ENCODE measurements at regions of chr12 and their contacts with region 1.

Region 1: DNA sequence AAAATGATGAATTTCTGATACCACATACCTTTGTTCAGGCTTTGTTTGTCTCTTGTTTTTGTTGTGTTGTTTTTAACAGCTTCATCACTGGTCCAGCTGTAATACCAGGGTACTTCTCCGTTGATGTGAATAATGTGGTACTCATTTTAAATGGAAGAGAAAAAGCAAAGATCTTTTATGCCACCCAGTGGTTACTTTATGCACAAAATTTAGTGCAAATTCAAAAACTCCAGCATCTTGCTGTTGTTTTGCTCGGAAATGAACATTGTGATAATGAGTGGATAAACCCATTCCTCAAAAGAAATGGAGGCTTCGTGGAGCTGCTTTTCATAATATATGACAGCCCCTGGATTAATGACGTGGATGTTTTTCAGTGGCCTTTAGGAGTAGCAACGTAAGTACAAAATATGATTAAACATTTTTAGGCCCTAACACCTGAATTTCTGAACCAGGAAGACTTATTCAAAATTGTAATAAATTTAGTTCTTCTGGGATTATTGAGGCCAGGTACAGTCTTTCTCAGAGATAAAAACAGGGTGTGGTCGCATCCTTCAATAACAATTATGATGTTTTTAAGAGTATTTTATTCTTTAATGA is 22.4 kb downstream of the RXYLT1 start:
- DNase-seq: peak; percentile 25
- ATAC-seq: peak; percentile 48
- H3K4me3 ChIP-seq: no peak overlapping the region
- H3K27ac ChIP-seq: no peak overlapping the region
- H3K4me1 ChIP-seq: no peaks in the 10 kb centered on the region; the same call in 1 of the 2 replicates
- H3K27me3 ChIP-seq: no peaks in the 10 kb centered on the region
- CTCF ChIP-seq: peak; percentile 63
- POLR2A ChIP-seq: no peak
- RAD21 ChIP-seq: peak; percentile 63

Region 2: GRCh38 chr12:63103494-63104131 is 698.5 kb before region 1 on chr12:
- CTCF ChIA-PET with region 1: no interaction called
- POLR2A ChIA-PET with region 1: no interaction called
- dilution Hi-C with region 1: no loop called
- in situ Hi-C with region 1: no loop called
- intact Hi-C with region 1: loop called (anchors 1 kb)
- DNase-seq: peak; percentile 23
- ATAC-seq: no peak; the same call in 1 of the 2 replicates
- H3K4me3 ChIP-seq: no peak overlapping the region
- H3K27ac ChIP-seq: no peak overlapping the region
- H3K4me1 ChIP-seq: no peaks in the 10 kb centered on the region
- H3K27me3 ChIP-seq: no peaks in the 10 kb centered on the region
- CTCF ChIP-seq: peak; percentile 61
- POLR2A ChIP-seq: no peak
- RAD21 ChIP-seq: peak; percentile 61

Region 3: GRCh38 chr12:63668028-63668799 is 133.9 kb before region 1 on chr12 and contains the start of gene DPY19L2:
- CTCF ChIA-PET with region 1: interaction called, 3 read pairs
- POLR2A ChIA-PET with region 1: no interaction called
- dilution Hi-C with region 1: no loop called
- in situ Hi-C with region 1: no loop called
- intact Hi-C with region 1: loop called (anchors 2 kb)
- DNase-seq: peak; percentile 52
- ATAC-seq: peak; percentile 90
- H3K4me3 ChIP-seq: peak within 1 kb of the TSS; percentile 97
- H3K27ac ChIP-seq: peak within 1 kb of the TSS; percentile 43
- H3K4me1 ChIP-seq: no peaks in the 10 kb centered on the region
- H3K27me3 ChIP-seq: no peaks in the 10 kb centered on the region
- CTCF ChIP-seq: no peak
- POLR2A ChIP-seq: no peak
- RAD21 ChIP-seq: no peak
- total RNA-seq, gene DPY19L2: 0.90 and 1.4 TPM in 2 replicates

Region 4: GRCh38 chr12:63753744-63754143 is 48.4 kb before region 1 on chr12:
- CTCF ChIA-PET with region 1: no interaction called
- POLR2A ChIA-PET with region 1: no interaction called
- dilution Hi-C with region 1: no loop called
- in situ Hi-C with region 1: no loop called
- intact Hi-C with region 1: no loop called
- DNase-seq: no peak
- ATAC-seq: no peak
- H3K4me3 ChIP-seq: no peak overlapping the region
- H3K27ac ChIP-seq: no peak overlapping the region
- H3K4me1 ChIP-seq: no peaks in the 10 kb centered on the region
- H3K27me3 ChIP-seq: peaks cover 6% of the 10 kb centered on the region
- CTCF ChIP-seq: no peak
- POLR2A ChIP-seq: no peak
- RAD21 ChIP-seq: no peak

Region 5: GRCh38 chr12:63779498-63780481 is 22.3 kb before region 1 on chr12 and contains the start of gene RXYLT1:
- CTCF ChIA-PET with region 1: interaction called, 3 read pairs
- POLR2A ChIA-PET with region 1: interaction called, 10 read pairs
- dilution Hi-C with region 1: no loop called
- in situ Hi-C with region 1: no loop called
- intact Hi-C with region 1: no loop called
- DNase-seq: peak; percentile 67
- ATAC-seq: peak; percentile 99
- H3K4me3 ChIP-seq: peak within 1 kb of the TSS; percentile 91
- H3K27ac ChIP-seq: peak within 1 kb of the TSS; percentile 99
- H3K4me1 ChIP-seq: no peaks in the 10 kb centered on the region
- H3K27me3 ChIP-seq: no peaks in the 10 kb centered on the region
- CTCF ChIP-seq: no peak
- POLR2A ChIP-seq: peak; percentile 84
- RAD21 ChIP-seq: no peak
- total RNA-seq, gene RXYLT1: 9.0 and 9.7 TPM in 2 replicates

Measured in IMR-90 (cell line).